Posterior vena cava (tissue), 2 donors: ENCODE measurements at regions of chr6 and their contacts with region 1.

Region 1: GRCh38 chr6:55980627-55981211 is 105.3 kb upstream of the BMP5 start:
- DNase-seq: no peak

Region 2: DNA sequence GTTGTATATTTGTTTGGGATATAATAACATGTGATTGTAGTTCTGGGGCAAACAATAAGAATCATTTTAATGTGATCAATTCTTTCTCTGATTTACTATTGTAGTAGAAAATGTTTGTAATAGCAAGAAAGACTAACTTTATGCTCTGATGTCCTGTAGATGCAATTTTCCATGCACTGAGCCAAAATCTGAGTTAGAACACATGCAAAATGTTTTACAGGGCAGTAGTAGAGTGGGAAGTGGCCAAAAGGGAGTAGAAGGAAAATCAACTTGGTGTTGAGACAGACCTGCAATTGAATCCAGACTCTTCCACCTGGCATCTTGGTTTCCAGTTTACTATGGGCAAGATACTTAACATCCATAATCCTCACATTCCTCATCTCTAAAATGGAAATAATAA is 11.8 kb before region 1 on chr6:
- intact Hi-C with region 1: no loop called
- DNase-seq: no peak

Region 3: DNA sequence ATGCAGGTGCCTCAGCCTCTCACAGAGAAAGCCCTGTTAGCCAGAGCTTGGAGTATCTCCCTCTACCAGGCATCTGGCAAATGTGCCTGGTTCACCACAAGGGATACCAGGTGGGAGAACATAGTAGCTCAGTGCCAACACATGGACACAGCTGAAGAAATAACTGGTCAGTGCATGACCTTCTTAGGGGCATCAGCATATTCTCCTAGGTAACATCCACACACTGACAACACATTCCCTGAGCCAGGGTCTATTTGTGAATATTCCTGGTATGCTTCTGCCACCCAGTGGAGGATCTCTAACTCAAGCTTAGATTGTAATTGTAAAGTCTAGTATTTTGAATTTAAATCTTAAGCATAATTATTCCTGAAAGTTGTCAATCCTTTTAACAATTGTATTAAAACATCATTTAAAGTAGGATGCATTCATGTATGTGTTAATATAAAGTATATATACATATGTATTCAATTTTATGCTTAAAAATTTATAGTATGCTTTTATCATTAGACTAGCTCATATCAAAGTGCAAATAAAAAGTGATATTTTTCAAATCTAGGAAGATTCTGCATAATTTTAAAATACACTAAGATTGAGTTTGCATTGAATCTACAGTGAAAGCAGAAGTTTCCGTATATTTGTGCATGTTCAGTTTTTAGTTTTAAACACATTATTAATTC is 311.9 kb after region 1 on chr6:
- intact Hi-C with region 1: loop called in 1 of 2 experiments (anchors 5 kb)
- DNase-seq: no peak

Region 4: DNA sequence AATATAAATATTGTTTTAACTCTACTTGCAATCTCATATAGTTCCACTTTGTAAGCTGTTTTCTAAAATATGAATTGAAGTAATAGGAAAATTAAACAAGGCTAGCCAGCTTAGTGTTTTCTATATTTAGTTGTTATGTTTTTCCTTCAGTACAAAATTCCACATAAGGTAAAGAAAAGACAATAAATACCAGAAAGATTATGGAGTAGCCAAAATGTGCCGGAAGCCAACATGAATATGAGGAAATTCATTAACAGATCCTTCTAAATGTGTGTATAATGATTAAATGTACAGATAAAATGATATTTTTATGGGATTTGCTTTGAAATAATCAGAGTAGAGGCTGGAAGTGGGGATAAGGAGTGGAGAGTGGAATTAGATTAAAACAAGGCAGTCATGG is 319.2 kb after region 1 on chr6:
- intact Hi-C with region 1: loop called in 1 of 2 experiments (anchors 2 kb)
- DNase-seq: no peak